ENCODE measurements at regions of chr4 and their contacts with region 1.

Region 1: GRCh38 chr4:25376754-25377571 is at the start of gene ANAPC4:
- DNase-seq: peak; percentile 95 to 99 (median 97)
- ATAC-seq: peak; percentile 94
- H3K4me3 ChIP-seq: peak within 1 kb of the TSS; percentile 94
- H3K4me3 Mint-ChIP-seq: no peak within 1 kb of the TSS
- H3K27ac ChIP-seq: peak within 1 kb of the TSS; percentile 42 to 48
- H3K27ac Mint-ChIP-seq: peak within 1 kb of the TSS; percentile 81
- H3K4me1 ChIP-seq: peaks cover 34% of the 10 kb centered on the region
- H3K4me1 Mint-ChIP-seq: peaks cover 7% of the 10 kb centered on the region
- H3K27me3 ChIP-seq: no peaks in the 10 kb centered on the region
- H3K27me3 Mint-ChIP-seq: no peaks in the 10 kb centered on the region
- CTCF ChIP-seq: no peak
- total RNA-seq, gene ANAPC4: 24.4 to 26.0 TPM

Region 2: DNA sequence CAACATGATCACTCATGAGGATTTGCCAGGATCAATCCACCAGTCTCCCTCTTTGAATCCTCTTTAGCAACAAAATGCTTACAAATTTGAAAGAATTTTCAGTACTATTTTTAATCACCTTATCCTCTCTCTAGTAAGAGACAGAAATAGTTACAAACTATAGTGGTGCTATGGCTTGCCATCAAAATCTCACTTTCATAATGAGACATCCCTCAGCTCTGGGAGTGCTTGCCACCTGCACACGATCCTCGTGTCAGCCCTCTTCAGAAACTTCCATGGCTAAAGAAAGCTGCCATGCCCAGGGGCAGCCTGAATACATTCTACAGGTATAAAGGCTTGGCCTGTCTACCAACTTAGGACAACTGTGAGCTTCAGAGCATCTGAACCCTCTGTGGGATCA is 787.5 kb before region 1 on chr4:
- CTCF ChIA-PET with region 1: no interaction called
- POLR2A ChIA-PET with region 1: no interaction called
- intact Hi-C with region 1: loop called in 1 of 2 experiments (anchors 5 kb)
- DNase-seq: no peak
- ATAC-seq: no peak
- H3K4me3 ChIP-seq: no peak overlapping the region
- H3K4me3 Mint-ChIP-seq: no peak overlapping the region
- H3K27ac ChIP-seq: no peak overlapping the region
- H3K27ac Mint-ChIP-seq: no peak overlapping the region
- H3K4me1 ChIP-seq: peaks cover 5% of the 10 kb centered on the region
- H3K4me1 Mint-ChIP-seq: peaks cover 4% of the 10 kb centered on the region
- H3K27me3 ChIP-seq: no peaks in the 10 kb centered on the region
- H3K27me3 Mint-ChIP-seq: peaks cover 18% of the 10 kb centered on the region
- CTCF ChIP-seq: no peak

Region 3: GRCh38 chr4:25159884-25160713 is 216.9 kb before region 1 on chr4 and contains the start of gene SEPSECS:
- CTCF ChIA-PET with region 1: interaction called, 4 read pairs
- POLR2A ChIA-PET with region 1: interaction called, 10 read pairs
- intact Hi-C with region 1: loop called (anchors 5 kb)
- DNase-seq: peak; percentile 84 to 98 (median 92)
- ATAC-seq: peak; percentile 82
- H3K4me3 ChIP-seq: peak within 1 kb of the TSS; percentile 91
- H3K4me3 Mint-ChIP-seq: peak within 1 kb of the TSS; percentile 93
- H3K27ac ChIP-seq: peak within 1 kb of the TSS; percentile 97 to 98
- H3K27ac Mint-ChIP-seq: peak within 1 kb of the TSS; percentile 96
- H3K4me1 ChIP-seq: peaks cover 26% of the 10 kb centered on the region
- H3K4me1 Mint-ChIP-seq: peaks cover 68% of the 10 kb centered on the region
- H3K27me3 ChIP-seq: no peaks in the 10 kb centered on the region
- H3K27me3 Mint-ChIP-seq: no peaks in the 10 kb centered on the region
- CTCF ChIP-seq: no peak
- total RNA-seq, gene SEPSECS: 18.5 to 18.7 TPM

Region 4: GRCh38 chr4:25592736-25593135 is 215.8 kb after region 1 on chr4:
- CTCF ChIA-PET with region 1: no interaction called
- POLR2A ChIA-PET with region 1: no interaction called
- intact Hi-C with region 1: no loop called
- DNase-seq: no peak
- ATAC-seq: no peak
- H3K4me3 ChIP-seq: no peak overlapping the region
- H3K4me3 Mint-ChIP-seq: no peak overlapping the region
- H3K27ac ChIP-seq: no peak overlapping the region
- H3K27ac Mint-ChIP-seq: no peak overlapping the region
- H3K4me1 ChIP-seq: no peaks in the 10 kb centered on the region
- H3K4me1 Mint-ChIP-seq: no peaks in the 10 kb centered on the region
- H3K27me3 ChIP-seq: no peaks in the 10 kb centered on the region
- H3K27me3 Mint-ChIP-seq: peaks cover 5% of the 10 kb centered on the region
- CTCF ChIP-seq: no peak

Region 5: DNA sequence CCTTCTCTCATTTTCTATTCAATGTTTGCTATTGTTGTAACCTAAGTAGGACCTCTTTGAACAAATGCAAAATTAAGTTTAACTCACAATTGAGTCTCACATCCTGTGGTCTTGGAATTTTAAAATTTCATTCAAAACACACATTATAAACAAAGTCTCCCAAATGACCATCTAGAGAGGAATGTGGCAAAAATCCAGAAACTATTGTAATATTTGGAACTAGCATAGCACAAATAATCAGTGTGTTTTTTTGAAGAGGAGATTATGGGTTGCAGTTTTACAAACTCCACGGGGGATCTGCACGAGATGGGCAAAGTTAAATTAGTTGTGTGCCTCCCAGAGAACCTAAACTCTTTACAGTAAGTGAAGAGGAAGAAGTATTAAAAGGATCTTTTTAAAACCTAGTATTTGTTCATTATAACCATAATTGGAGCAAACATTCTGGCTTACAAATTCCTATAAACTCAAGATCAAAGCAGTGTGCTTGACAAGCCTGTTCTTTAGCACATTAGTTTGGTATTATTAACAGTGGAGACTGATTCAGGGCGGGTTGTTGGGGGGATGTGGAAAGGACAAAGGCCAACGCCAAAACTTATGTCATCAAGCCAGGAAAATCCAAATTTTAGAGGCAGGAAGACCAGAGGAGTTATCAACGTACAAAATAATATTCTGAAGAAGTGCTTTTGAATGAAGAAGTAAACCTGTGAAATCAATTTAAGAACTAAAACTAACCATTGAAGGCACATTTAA is 921.4 kb after region 1 on chr4:
- CTCF ChIA-PET with region 1: no interaction called
- POLR2A ChIA-PET with region 1: no interaction called
- intact Hi-C with region 1: no loop called
- DNase-seq: no peak
- ATAC-seq: no peak
- H3K4me3 ChIP-seq: no peak overlapping the region
- H3K4me3 Mint-ChIP-seq: no peak overlapping the region
- H3K27ac ChIP-seq: no peak overlapping the region
- H3K27ac Mint-ChIP-seq: no peak overlapping the region
- H3K4me1 ChIP-seq: peaks cover 6% of the 10 kb centered on the region
- H3K4me1 Mint-ChIP-seq: no peaks in the 10 kb centered on the region
- H3K27me3 ChIP-seq: no peaks in the 10 kb centered on the region
- H3K27me3 Mint-ChIP-seq: no peaks in the 10 kb centered on the region
- CTCF ChIP-seq: no peak

Measured in CD4-positive, alpha-beta T cell (primary cell).